ENCODE measurements at regions of chr7 and their contacts with region 1.

Region 1: GRCh38 chr7:40808378-40808942 is 673.7 kb downstream of the SUGCT start:
- DNase-seq: peak; percentile 12 to 92
- H3K4me3 ChIP-seq: no peak overlapping the region
- H3K27ac ChIP-seq: peak overlapping the region; percentile 72
- H3K4me1 ChIP-seq: peaks cover 15% of the 10 kb centered on the region
- H3K27me3 ChIP-seq: no peaks in the 10 kb centered on the region
- CTCF ChIP-seq: no peak

Region 2: GRCh38 chr7:40666848-40667247 is 141.6 kb before region 1 on chr7:
- CTCF ChIA-PET with region 1: no interaction called
- POLR2A ChIA-PET with region 1: no interaction called
- intact Hi-C with region 1: no loop called
- DNase-seq: no peak
- H3K4me3 ChIP-seq: no peak overlapping the region
- H3K27ac ChIP-seq: no peak overlapping the region
- H3K4me1 ChIP-seq: no peaks in the 10 kb centered on the region
- H3K27me3 ChIP-seq: no peaks in the 10 kb centered on the region
- CTCF ChIP-seq: no peak

Region 3: GRCh38 chr7:40850017-40850416 is 41.6 kb after region 1 on chr7:
- CTCF ChIA-PET with region 1: interaction called, 13 read pairs
- POLR2A ChIA-PET with region 1: no interaction called
- intact Hi-C with region 1: no loop called
- DNase-seq: no peak
- H3K4me3 ChIP-seq: no peak overlapping the region
- H3K27ac ChIP-seq: no peak overlapping the region
- H3K4me1 ChIP-seq: no peaks in the 10 kb centered on the region
- H3K27me3 ChIP-seq: no peaks in the 10 kb centered on the region
- CTCF ChIP-seq: no peak